Heart left ventricle (tissue), 16 donors: ENCODE measurements at regions of chr9 and their contacts with region 1.

Region 1: GRCh38 chr9:122991370-122991830 is 42.1 kb upstream of the GPR21 start:
- DNase-seq: peak in 1 of 5 donors; percentile 40
- ATAC-seq: peak in 3 of 4 donors; percentile 44 to 78 (median 74)
- H3K4me3 ChIP-seq: no peak overlapping the region
- H3K27ac ChIP-seq: no peak overlapping the region
- H3K4me1 ChIP-seq: peaks cover 0 to 5% (median 0%) of the 10 kb centered on the region in 12 donors
- H3K27me3 ChIP-seq: no peaks in the 10 kb centered on the region
- CTCF ChIP-seq: peak; percentile 59 to 86 (median 65)
- POLR2A ChIP-seq: no peak

Region 2: GRCh38 chr9:122464633-122465567 is 526.5 kb before region 1 on chr9:
- intact Hi-C with region 1: loop called in 3 of 10 experiments (anchors 10 kb)
- DNase-seq: peak in 4 of 5 donors; percentile 66 to 72 (median 67)
- ATAC-seq: peak; percentile 69 to 85 (median 81)
- H3K4me3 ChIP-seq: peak overlapping the region in 10 of 12 donors; percentile 23 to 60 (median 48)
- H3K27ac ChIP-seq: peak overlapping the region in 3 of 12 donors; percentile 14 to 78 (median 39)
- H3K4me1 ChIP-seq: peaks cover 0 to 14% (median 5%) of the 10 kb centered on the region in 12 donors
- H3K27me3 ChIP-seq: peaks cover 0 to 16% (median 0%) of the 10 kb centered on the region in 9 donors
- CTCF ChIP-seq: peak; percentile 71 to 88 (median 82)
- POLR2A ChIP-seq: no peak

Region 3: DNA sequence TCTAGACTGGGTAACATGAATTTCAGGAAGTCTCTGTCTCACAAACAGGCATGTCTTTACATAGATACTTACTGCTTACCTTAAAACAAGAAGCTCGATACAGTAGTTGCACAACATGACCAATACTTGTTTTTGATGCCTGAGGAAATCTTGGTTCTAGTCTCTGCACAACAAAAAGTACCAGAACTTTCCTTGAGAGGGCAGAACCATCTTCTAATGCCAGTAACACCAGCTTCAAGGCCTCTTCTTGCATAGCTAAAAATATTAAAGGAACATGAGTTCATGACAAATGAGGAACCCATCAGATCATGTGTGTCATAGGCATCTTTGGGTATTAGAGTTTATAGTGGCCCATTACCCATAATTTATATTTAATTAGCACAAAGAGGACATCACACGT is 108.3 kb before region 1 on chr9:
- intact Hi-C with region 1: loop called in 1 of 10 experiments (anchors 10 kb)
- DNase-seq: no peak
- ATAC-seq: no peak
- H3K4me3 ChIP-seq: no peak overlapping the region
- H3K27ac ChIP-seq: no peak overlapping the region
- H3K4me1 ChIP-seq: no peaks in the 10 kb centered on the region
- H3K27me3 ChIP-seq: no peaks in the 10 kb centered on the region
- CTCF ChIP-seq: no peak
- POLR2A ChIP-seq: no peak

Region 4: DNA sequence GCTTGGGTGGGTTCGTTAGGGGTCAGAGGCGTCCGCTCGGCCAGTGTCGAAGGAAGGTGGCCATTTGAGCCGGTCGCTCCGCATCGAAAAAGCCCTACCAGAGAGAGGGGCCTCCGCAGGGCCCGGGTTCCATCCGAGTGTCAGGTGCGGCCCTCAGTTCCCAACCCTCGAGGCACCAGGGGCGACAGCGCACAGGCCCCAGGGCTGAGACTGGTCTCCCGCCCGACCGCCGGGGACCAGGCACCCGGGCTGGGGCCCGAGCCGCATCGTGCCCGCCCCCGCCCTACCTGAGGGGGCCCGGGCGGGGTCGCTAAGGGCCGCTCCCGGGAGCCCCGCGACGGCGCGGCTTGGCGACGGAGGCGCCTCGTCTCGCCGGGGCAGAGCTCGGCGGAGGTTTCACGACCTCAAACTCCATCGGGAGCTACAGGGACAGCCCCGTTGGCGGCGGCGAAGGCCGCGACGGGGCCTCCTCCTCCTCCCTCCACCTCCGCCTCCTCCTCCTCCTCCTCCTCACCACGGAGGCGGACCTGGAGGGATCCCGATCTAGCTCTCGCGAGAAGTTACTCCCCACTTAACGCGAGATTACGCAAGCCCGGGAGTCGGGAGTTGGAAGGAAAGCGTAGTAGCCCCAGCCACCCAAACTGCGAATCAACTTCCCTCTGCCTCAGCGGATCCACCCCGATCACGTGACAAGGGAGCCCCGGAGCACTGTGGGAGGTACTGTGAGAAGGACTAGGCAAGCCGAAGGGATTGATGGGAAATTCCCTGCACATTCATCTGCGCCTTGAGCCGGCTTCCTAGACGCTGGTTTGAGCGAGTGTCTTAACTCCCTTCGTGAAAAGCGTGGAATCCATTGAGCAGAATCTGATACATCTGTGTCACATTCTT is 86.3 kb before region 1 on chr9 and contains the start of gene RC3H2:
- intact Hi-C with region 1: loop called in 3 of 10 experiments (anchors 5 to 10 kb)
- DNase-seq: peak; percentile 97 to 99 (median 99)
- ATAC-seq: peak; percentile 98 to 99 (median 99)
- H3K4me3 ChIP-seq: peak within 1 kb of the TSS; percentile 75 to 93 (median 86)
- H3K27ac ChIP-seq: peak within 1 kb of the TSS; percentile 87 to 98 (median 96)
- H3K4me1 ChIP-seq: peaks cover 3 to 44% (median 29%) of the 10 kb centered on the region in 12 donors
- H3K27me3 ChIP-seq: no peaks in the 10 kb centered on the region
- CTCF ChIP-seq: peak in 1 of 12 donors; percentile 8
- POLR2A ChIP-seq: peak; percentile 90 to 98
- total RNA-seq, gene RC3H2: 36.2 to 52.2 (median 45.4) TPM

Region 5: DNA sequence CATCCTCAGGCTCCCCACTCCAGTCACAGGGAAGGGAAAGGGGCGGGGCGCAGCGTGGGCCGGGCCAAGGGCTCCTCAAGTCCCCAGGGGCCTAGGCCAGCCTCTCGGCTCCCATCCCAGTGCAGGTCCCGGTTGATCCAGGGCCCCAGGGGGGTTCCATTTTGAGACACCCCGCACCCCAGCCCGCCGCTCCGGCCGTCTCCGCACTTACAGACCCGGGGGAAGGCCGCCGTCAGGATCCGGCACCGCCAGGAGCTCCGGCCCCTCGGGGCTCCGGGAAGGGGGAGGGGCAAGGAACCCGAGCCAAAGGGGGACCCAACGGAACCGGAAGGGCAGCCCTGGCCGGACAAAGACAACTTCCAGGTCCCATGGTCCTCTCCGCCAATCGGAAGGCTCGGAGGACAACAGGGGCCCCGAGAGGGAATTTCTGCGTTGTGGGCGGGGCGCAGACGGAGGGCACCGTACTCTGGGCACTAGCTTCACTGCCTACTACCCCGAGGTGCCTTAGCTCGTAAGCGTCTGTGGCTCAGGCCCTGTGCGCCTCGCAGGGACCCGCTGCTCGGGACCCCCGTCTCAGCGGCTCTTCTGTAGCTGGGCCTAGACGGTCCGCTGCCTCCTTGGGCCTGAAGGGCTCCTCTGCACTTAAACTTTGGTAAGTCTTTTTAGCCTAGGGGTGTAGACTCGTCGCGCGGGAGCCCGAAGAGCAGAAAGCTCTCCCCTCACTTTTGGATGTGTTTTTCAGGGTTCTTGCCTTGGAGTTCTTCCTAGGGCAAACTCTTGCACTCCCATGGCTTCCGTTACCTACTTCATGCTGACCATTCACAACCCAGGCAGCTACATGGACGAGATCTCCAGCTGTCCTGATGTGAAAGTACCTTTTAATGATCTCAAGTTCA is 59.9 kb before region 1 on chr9 and contains the start of gene ZBTB26:
- intact Hi-C with region 1: loop called in 1 of 10 experiments (anchors 10 kb)
- DNase-seq: peak; percentile 94 to 97 (median 96)
- ATAC-seq: peak; percentile 99
- H3K4me3 ChIP-seq: peak within 1 kb of the TSS; percentile 63 to 99 (median 80)
- H3K27ac ChIP-seq: peak within 1 kb of the TSS; percentile 70 to 94 (median 90)
- H3K4me1 ChIP-seq: peaks cover 3 to 42% (median 32%) of the 10 kb centered on the region in 12 donors
- H3K27me3 ChIP-seq: no peaks in the 10 kb centered on the region
- CTCF ChIP-seq: no peak
- POLR2A ChIP-seq: peak in 1 of 2 donors; percentile 71
- total RNA-seq, gene ZBTB26: 2.3 to 6.1 (median 3.7) TPM

Region 6: DNA sequence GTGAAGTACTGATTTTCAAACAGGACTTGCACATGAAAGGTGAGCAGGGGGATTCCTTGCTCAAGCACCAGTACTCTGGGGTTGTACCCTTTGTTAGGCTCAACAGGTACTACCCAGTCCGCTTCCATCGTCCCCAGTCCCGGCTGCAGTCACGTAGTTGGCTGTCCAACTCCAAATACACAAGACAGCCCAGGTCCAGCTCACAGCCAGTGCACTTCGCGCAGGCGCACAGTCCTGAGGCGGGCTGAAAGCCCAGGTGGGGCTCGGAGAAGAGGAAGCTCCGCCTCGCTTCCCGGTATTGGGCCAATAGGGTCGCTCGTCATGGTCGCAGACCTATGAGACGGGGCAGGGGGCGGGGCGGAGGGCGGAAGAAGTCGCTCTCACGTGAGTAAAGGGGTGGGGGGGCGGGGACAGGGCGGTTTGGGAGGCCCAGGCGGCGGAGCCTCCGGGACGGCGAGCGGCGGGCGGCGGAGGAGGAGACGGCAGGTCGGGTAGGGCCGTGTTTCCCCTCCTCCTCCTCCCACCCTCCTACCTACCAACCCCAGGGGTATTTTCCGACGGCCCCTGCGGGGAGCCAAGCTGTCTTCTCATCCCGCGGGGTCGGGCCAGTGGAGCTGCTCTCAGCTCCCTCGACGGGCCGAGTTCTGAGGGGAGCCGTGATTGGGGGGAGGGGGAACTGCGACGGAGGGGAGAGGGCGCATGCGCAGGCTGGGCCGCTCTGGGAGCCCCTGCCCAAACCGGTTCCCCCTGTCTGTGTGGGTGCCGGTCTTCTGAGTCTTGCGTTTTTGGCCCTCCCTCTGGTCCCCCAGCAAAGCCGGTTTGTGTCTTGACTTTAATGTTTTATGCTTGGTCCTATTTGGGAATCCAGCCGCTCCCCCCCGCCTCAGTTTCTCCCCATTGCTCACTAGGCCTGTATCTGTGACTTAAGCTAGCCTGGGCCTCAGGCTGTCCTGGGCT is 50.5 kb before region 1 on chr9 and contains the start of gene RABGAP1:
- intact Hi-C with region 1: loop called in 3 of 10 experiments (anchors 5 to 10 kb)
- DNase-seq: peak; percentile 99 to 100 (median 100)
- ATAC-seq: peak; percentile 98 to 100 (median 99)
- H3K4me3 ChIP-seq: peak within 1 kb of the TSS; percentile 74 to 99 (median 86)
- H3K27ac ChIP-seq: peak within 1 kb of the TSS; percentile 69 to 95 (median 90)
- H3K4me1 ChIP-seq: peaks cover 0 to 41% (median 31%) of the 10 kb centered on the region in 12 donors
- H3K27me3 ChIP-seq: no peaks in the 10 kb centered on the region
- CTCF ChIP-seq: no peak
- POLR2A ChIP-seq: peak in 1 of 2 donors; percentile 82
- total RNA-seq, gene RABGAP1: 22.0 to 62.2 (median 45.1) TPM